ENCODE measurements at regions of chr5 and their contacts with region 1.

Region 1: GRCh38 chr5:68252673-68253623 is 37.4 kb downstream of the PIK3R1 start:
- DNase-seq: no peak
- ATAC-seq: peak; percentile 89
- H3K4me3 ChIP-seq: no peak overlapping the region
- H3K27ac ChIP-seq: no peak overlapping the region
- H3K4me1 ChIP-seq: no peaks in the 10 kb centered on the region
- H3K27me3 ChIP-seq: no peaks in the 10 kb centered on the region
- CTCF ChIP-seq: peak; percentile 76 to 81 (median 78)
- EP300 ChIP-seq: no peak
- POLR2A ChIP-seq: no peak
- RAD21 ChIP-seq: peak; percentile 97

Region 2: GRCh38 chr5:67156976-67157583 is 1095.9 kb before region 1 on chr5:
- CTCF ChIA-PET with region 1: no interaction called
- POLR2A ChIA-PET with region 1: no interaction called
- RAD21 ChIA-PET with region 1: interaction called, 6 read pairs
- SMC1A ChIA-PET with region 1: no interaction called
- in situ Hi-C with region 1: no loop called
- intact Hi-C with region 1: loop called (anchors 10 kb)
- DNase-seq: no peak
- ATAC-seq: peak; percentile 85
- H3K4me3 ChIP-seq: no peak overlapping the region
- H3K27ac ChIP-seq: no peak overlapping the region
- H3K4me1 ChIP-seq: peaks cover 4% of the 10 kb centered on the region; the same call in 1 of the 2 replicates
- H3K27me3 ChIP-seq: no peaks in the 10 kb centered on the region; a peak in 2 of 4 replicates
- CTCF ChIP-seq: peak; percentile 74 to 80 (median 79)
- EP300 ChIP-seq: no peak
- POLR2A ChIP-seq: no peak
- RAD21 ChIP-seq: peak; percentile 60

Region 3: GRCh38 chr5:67246108-67246507 is 1006.8 kb before region 1 on chr5:
- CTCF ChIA-PET with region 1: interaction called, 73 read pairs
- POLR2A ChIA-PET with region 1: no interaction called
- RAD21 ChIA-PET with region 1: interaction called, 22 read pairs
- SMC1A ChIA-PET with region 1: interaction called, 39 read pairs
- in situ Hi-C with region 1: loop called (anchors 5 kb)
- intact Hi-C with region 1: loop called (anchors 1 kb)
- DNase-seq: peak; percentile 19
- ATAC-seq: peak; percentile 73
- H3K4me3 ChIP-seq: no peak overlapping the region
- H3K27ac ChIP-seq: no peak overlapping the region
- H3K4me1 ChIP-seq: no peaks in the 10 kb centered on the region
- H3K27me3 ChIP-seq: no peaks in the 10 kb centered on the region
- CTCF ChIP-seq: peak; percentile 52 to 65 (median 60); a peak in 5 of 6 replicates
- EP300 ChIP-seq: no peak
- POLR2A ChIP-seq: no peak
- RAD21 ChIP-seq: peak; percentile 83

Region 4: GRCh38 chr5:67493676-67494075 is 759.3 kb before region 1 on chr5:
- CTCF ChIA-PET with region 1: interaction called, 6 read pairs
- POLR2A ChIA-PET with region 1: no interaction called
- RAD21 ChIA-PET with region 1: interaction called, 7 read pairs
- SMC1A ChIA-PET with region 1: no interaction called
- in situ Hi-C with region 1: no loop called
- intact Hi-C with region 1: loop called (anchors 2 kb)
- DNase-seq: no peak
- ATAC-seq: peak; percentile 51
- H3K4me3 ChIP-seq: no peak overlapping the region
- H3K27ac ChIP-seq: no peak overlapping the region
- H3K4me1 ChIP-seq: no peaks in the 10 kb centered on the region
- H3K27me3 ChIP-seq: no peaks in the 10 kb centered on the region
- CTCF ChIP-seq: peak in 2 of 3 experiments; percentile 24 to 41; a peak in 3 of 6 replicates
- EP300 ChIP-seq: no peak
- POLR2A ChIP-seq: no peak
- RAD21 ChIP-seq: peak; percentile 33; the same call in 1 of the 2 replicates

Region 5: GRCh38 chr5:67648201-67648671 is 604.7 kb before region 1 on chr5:
- CTCF ChIA-PET with region 1: no interaction called
- POLR2A ChIA-PET with region 1: no interaction called
- RAD21 ChIA-PET with region 1: no interaction called
- SMC1A ChIA-PET with region 1: no interaction called
- in situ Hi-C with region 1: no loop called
- intact Hi-C with region 1: loop called (anchors 10 kb)
- DNase-seq: no peak
- ATAC-seq: no peak
- H3K4me3 ChIP-seq: no peak overlapping the region
- H3K27ac ChIP-seq: no peak overlapping the region
- H3K4me1 ChIP-seq: no peaks in the 10 kb centered on the region
- H3K27me3 ChIP-seq: no peaks in the 10 kb centered on the region
- CTCF ChIP-seq: no peak
- EP300 ChIP-seq: no peak
- POLR2A ChIP-seq: no peak
- RAD21 ChIP-seq: no peak

Region 6: DNA sequence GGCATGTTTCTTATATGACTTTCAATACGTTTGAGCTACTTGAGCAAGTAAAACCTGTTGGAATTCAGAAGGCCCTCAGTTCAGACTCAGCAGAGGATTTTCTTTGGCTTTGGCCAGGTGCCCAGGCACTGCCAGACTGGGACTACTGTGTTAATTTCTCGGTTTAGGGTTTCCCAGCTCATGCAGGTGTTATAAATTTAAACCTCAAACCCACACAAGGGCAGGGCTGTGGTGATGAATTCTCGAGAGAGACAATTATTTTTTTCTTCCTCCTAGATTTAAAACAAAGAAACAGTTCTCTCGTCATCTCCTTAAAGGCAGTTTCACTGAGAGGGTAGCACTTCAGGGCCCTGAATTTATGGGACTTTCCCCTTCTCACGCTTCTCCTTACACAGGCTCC is 443.4 kb before region 1 on chr5:
- CTCF ChIA-PET with region 1: no interaction called
- POLR2A ChIA-PET with region 1: no interaction called
- RAD21 ChIA-PET with region 1: no interaction called
- SMC1A ChIA-PET with region 1: interaction called, 3 read pairs
- in situ Hi-C with region 1: no loop called
- intact Hi-C with region 1: loop called (anchors 5 kb)
- DNase-seq: peak; percentile 83
- ATAC-seq: peak; percentile 82
- H3K4me3 ChIP-seq: no peak overlapping the region
- H3K27ac ChIP-seq: no peak overlapping the region
- H3K4me1 ChIP-seq: peaks cover 17% of the 10 kb centered on the region
- H3K27me3 ChIP-seq: no peaks in the 10 kb centered on the region
- CTCF ChIP-seq: no peak
- EP300 ChIP-seq: peak; percentile 68 to 73; a peak in 2 of 4 replicates
- POLR2A ChIP-seq: no peak
- RAD21 ChIP-seq: no peak

Region 7: GRCh38 chr5:68396722-68397121 is 143.8 kb after region 1 on chr5:
- CTCF ChIA-PET with region 1: no interaction called
- POLR2A ChIA-PET with region 1: no interaction called
- RAD21 ChIA-PET with region 1: no interaction called
- SMC1A ChIA-PET with region 1: no interaction called
- in situ Hi-C with region 1: no loop called
- intact Hi-C with region 1: no loop called
- DNase-seq: no peak
- ATAC-seq: no peak
- H3K4me3 ChIP-seq: no peak overlapping the region
- H3K27ac ChIP-seq: no peak overlapping the region
- H3K4me1 ChIP-seq: no peaks in the 10 kb centered on the region; the same call in 1 of the 2 replicates
- H3K27me3 ChIP-seq: no peaks in the 10 kb centered on the region
- CTCF ChIP-seq: no peak
- EP300 ChIP-seq: no peak
- POLR2A ChIP-seq: no peak
- RAD21 ChIP-seq: no peak